ENCODE measurements at regions of chr2 and their contacts with region 1.

Region 1: GRCh38 chr2:232854082-232854481 is 16.0 kb upstream of the SNORC start:
- DNase-seq: no peak
- H3K4me3 ChIP-seq: no peak overlapping the region
- H3K27ac ChIP-seq: no peak overlapping the region
- H3K4me1 ChIP-seq: peaks cover 0 to 1% (median 0%) of the 10 kb centered on the region in 4 experiments
- H3K27me3 ChIP-seq: no peaks in the 10 kb centered on the region

Region 2: DNA sequence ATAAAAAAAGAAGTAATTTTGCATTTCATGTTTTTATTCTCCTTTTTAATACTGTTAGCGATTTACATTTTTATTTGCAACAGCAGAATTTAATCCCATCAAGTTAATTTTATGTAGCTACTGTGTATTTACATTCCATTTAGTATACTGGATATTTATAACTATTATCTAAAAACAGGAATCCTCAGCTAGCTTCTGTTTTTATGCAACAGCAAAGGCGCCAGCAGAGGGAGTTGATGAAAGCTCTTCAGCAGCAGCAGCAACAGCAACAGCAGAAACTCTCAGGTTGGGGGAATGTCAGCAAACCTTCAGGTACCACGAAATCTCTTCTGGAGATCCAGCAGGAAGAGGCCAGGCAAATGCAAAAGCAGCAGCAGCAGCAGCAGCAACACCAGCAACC is 10.2 kb before region 1 on chr2:
- CTCF ChIA-PET with region 1: interaction called, 24 read pairs
- POLR2A ChIA-PET with region 1: no interaction called
- DNase-seq: peak in 1 of 3 donors; percentile 11
- H3K4me3 ChIP-seq: no peak overlapping the region
- H3K27ac ChIP-seq: no peak overlapping the region
- H3K4me1 ChIP-seq: peaks cover 8 to 12% (median 11%) of the 10 kb centered on the region in 4 experiments
- H3K27me3 ChIP-seq: no peaks in the 10 kb centered on the region

Region 3: GRCh38 chr2:233251306-233252116 is 397.4 kb after region 1 on chr2 and contains the start of gene ATG16L1:
- CTCF ChIA-PET with region 1: interaction called, 12 read pairs
- POLR2A ChIA-PET with region 1: no interaction called
- DNase-seq: peak; percentile 97 to 99 (median 98)
- H3K4me3 ChIP-seq: peak within 1 kb of the TSS; percentile 89 to 98 (median 96)
- H3K27ac ChIP-seq: peak within 1 kb of the TSS; percentile 37 to 80
- H3K4me1 ChIP-seq: peaks cover 12 to 42% (median 27%) of the 10 kb centered on the region in 4 experiments
- H3K27me3 ChIP-seq: no peaks in the 10 kb centered on the region

Measured in common myeloid progenitor, CD34-positive (primary cell).